ENCODE measurements at regions of chr19 and their contacts with region 1.

Region 1: GRCh38 chr19:47813304-47814004 is 8.3 kb upstream of the CRX start:
- DNase-seq: peak; percentile 86
- H3K4me3 ChIP-seq: no peak overlapping the region
- H3K27ac ChIP-seq: no peak overlapping the region
- H3K4me1 ChIP-seq: no peaks in the 10 kb centered on the region
- H3K27me3 ChIP-seq: no peaks in the 10 kb centered on the region
- CTCF ChIP-seq: peak; percentile 42

Region 2: DNA sequence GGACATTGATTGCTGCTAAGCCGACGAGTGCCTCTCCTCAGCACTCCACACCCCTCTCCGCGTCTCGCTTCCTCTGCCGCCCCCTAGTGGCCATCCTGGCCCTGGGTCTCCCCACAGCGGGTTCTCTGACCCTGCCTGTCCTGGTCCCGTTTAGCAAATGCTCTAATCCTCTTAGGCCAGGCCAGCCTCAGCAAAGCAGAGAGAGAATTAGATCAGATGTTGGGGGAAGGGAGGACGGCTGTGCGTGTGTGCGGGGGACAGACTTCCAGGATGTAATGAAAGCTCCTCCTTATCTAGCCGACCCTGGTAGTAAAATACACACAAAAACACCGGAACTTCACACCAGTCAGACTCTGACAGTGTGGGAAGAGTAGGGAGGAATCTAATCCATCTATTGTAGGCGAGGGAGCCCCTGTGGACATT is 50.1 kb after region 1 on chr19:
- intact Hi-C with region 1: loop called (anchors 5 kb)
- DNase-seq: peak; percentile 91
- H3K4me3 ChIP-seq: no peak overlapping the region
- H3K27ac ChIP-seq: no peak overlapping the region
- H3K4me1 ChIP-seq: no peaks in the 10 kb centered on the region
- H3K27me3 ChIP-seq: no peaks in the 10 kb centered on the region
- CTCF ChIP-seq: peak; percentile 94

Measured in colonic mucosa (tissue), 4 donors.